ENCODE measurements at regions of chr5 and their contacts with region 1.

Region 1: DNA sequence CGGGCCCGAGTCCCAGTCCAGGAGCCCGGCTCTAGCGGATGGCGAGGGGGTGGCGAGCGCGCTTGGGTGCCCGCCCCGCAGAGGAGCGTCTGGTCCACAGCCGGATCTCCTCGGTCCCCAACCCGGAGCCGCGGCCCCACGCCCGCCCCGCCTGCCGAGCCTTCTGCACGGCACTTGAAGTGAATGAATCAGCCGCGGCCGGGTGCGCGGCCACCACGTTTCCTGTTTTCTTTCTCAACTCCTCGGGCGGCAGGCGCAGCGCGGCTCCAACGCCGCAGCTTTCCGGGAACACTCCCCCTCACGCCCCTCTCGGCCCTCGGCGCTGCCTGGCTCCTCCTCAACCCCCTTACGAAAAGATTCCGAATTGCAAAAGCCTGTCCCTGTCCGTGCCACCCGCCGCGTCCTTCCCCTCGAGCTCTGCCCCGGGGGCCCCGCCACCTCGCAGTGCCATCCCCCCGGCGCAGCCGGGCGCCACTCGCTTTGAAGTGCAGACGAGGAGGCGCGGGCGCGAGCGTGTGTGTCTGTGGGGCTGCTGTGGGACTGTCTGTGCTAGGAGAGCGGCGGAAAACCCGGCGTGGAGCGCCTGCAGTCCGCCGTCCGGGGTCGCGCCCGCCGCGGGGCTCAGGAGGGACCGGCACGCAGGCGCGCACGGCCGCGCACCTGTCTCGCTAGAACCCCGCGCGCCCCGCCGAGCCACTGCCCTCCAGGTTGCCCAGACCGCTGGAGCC is 456.6 kb downstream of the RAB3C start:
- DNase-seq: peak; percentile 95
- ATAC-seq: peak; percentile 75
- H3K4me3 Mint-ChIP-seq: peak overlapping the region; percentile 86
- H3K27ac Mint-ChIP-seq: peak overlapping the region; percentile 88
- H3K4me1 Mint-ChIP-seq: peaks cover 39% of the 10 kb centered on the region
- H3K27me3 Mint-ChIP-seq: no peaks in the 10 kb centered on the region

Region 2: GRCh38 chr5:58999804-59000595 is 39.5 kb before region 1 on chr5:
- CTCF ChIA-PET with region 1: interaction called, 5 read pairs
- POLR2A ChIA-PET with region 1: no interaction called
- intact Hi-C with region 1: loop called in 1 of 2 experiments (anchors 5 kb)
- DNase-seq: peak; percentile 27
- ATAC-seq: no peak
- H3K4me3 Mint-ChIP-seq: no peak overlapping the region
- H3K27ac Mint-ChIP-seq: no peak overlapping the region
- H3K4me1 Mint-ChIP-seq: peaks cover 54% of the 10 kb centered on the region
- H3K27me3 Mint-ChIP-seq: no peaks in the 10 kb centered on the region

Region 3: DNA sequence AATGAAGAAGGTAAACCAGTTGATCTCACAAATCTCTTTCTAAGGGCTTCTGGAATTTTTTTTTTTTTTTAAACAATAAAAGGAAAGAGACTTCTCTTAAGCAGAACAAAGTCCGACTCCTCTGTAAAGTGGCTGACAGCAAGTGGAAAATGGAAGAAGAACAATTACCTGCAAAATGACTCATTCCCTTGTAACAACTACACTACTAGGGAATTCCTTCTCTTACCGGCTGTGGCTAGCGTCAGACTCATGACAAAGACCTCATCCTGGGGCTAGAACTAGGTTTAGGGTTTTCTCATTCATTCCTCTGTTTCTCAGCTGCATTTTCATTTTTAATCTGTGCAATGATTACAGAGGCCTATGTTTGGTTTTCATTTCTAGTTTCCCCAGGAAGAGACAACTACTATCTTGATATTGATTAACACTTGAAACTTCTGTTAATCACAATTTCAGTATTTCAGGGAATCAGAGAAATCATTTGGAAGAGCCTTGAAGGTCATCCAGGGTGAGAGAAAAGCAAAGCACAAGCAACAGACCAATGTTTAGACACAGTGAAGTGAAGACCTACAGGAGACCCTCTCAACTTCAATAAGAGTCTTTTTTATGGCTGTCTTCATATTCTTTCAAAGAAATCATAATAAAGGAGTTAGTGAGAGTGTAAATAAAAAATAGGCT is 18.7 kb before region 1 on chr5:
- CTCF ChIA-PET with region 1: interaction called, 19 read pairs
- POLR2A ChIA-PET with region 1: interaction called, 11 read pairs
- intact Hi-C with region 1: loop called (anchors 1 kb)
- DNase-seq: peak; percentile 70
- ATAC-seq: peak; percentile 94
- H3K4me3 Mint-ChIP-seq: peak overlapping the region; percentile 47
- H3K27ac Mint-ChIP-seq: peak overlapping the region; percentile 94
- H3K4me1 Mint-ChIP-seq: peaks cover 65% of the 10 kb centered on the region
- H3K27me3 Mint-ChIP-seq: no peaks in the 10 kb centered on the region

Region 4: DNA sequence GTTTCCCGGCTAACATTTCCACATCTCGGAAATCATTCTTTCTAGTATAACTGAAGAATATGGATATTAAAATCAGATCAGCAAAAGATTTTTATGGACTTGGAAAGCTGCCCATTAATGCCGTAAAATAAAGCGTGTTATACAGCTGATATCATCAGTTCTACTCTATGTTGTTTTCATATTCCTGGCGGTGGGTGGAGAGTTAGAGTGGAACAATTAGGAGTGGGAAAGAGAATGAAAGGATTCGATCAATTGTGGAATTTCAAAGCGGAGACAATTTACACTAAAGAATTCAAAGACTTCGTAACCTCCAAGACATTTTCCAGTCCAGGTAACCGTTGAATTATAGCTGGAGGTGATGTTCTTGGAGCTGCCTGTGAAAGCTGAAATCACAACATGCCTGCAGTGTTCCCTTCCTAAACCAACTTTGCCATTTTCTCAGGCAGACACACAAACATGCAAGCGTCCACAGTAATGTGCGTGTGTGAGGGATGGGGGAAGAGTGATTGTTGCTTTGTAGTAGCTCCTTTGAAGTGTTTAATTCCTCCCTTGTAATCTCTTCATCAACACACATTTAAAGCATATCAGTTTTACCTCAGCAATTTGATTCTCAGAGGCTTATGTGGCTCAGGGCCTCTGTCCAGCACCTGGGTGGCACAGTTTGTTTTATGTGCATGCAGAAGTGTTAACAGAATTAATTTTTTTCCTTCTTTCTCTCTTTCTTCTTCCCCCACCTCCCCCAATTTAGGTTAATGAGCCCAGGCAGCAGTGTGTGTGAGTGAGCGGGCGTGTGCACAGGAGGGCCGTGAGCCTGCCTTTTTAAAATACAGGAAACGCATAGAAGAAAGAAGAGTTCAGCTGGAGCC is 87.5 kb after region 1 on chr5:
- CTCF ChIA-PET with region 1: interaction called, 55 read pairs
- POLR2A ChIA-PET with region 1: interaction called, 10 read pairs
- intact Hi-C with region 1: loop called (anchors 1 kb)
- DNase-seq: no peak
- ATAC-seq: peak; percentile 7
- H3K4me3 Mint-ChIP-seq: no peak overlapping the region
- H3K27ac Mint-ChIP-seq: no peak overlapping the region
- H3K4me1 Mint-ChIP-seq: peaks cover 23% of the 10 kb centered on the region
- H3K27me3 Mint-ChIP-seq: no peaks in the 10 kb centered on the region

Region 5: DNA sequence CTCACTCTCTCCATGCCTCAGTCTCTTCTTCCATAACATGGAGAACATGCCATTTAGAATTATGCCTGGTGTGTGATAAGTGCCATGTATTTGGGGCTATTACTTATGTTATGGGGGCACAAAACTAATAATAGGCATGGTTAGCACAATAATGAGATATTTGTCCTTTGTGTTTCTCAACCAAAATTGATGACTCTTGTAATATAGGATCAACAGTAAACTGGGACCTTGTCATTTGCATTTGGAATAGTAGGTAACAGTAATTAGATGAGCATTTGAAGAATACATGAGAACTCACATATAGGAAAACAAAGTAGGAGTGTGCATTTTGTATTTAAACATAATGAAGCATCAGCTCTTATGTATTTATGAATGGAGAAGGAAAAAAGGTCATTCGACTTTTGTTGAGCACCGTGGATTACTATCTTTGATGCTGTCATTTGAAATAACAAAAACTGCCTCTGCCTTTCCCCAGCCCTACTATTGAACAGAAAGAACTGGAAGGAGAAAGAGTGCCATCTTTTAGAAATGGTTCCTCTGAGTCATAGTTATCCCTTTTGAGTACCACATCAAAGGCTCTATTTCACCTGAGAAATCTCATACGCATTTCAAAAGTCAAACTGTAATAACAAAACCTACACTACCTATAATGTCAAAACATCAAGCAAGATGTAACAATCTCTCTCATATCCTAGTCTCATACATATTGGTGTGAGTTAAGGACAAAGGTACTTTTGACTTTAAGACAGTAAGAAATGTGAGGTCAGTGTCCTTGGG is 198.9 kb after region 1 on chr5:
- CTCF ChIA-PET with region 1: no interaction called
- POLR2A ChIA-PET with region 1: no interaction called
- intact Hi-C with region 1: loop called in 1 of 2 experiments (anchors 1 kb)
- DNase-seq: peak; percentile 20
- ATAC-seq: peak; percentile 96
- H3K4me3 Mint-ChIP-seq: no peak overlapping the region
- H3K27ac Mint-ChIP-seq: no peak overlapping the region
- H3K4me1 Mint-ChIP-seq: peaks cover 22% of the 10 kb centered on the region
- H3K27me3 Mint-ChIP-seq: peaks cover 45% of the 10 kb centered on the region

Region 6: GRCh38 chr5:59312223-59312622 is 272.8 kb after region 1 on chr5:
- CTCF ChIA-PET with region 1: no interaction called
- POLR2A ChIA-PET with region 1: no interaction called
- intact Hi-C with region 1: no loop called
- DNase-seq: no peak
- ATAC-seq: no peak
- H3K4me3 Mint-ChIP-seq: no peak overlapping the region
- H3K27ac Mint-ChIP-seq: no peak overlapping the region
- H3K4me1 Mint-ChIP-seq: no peaks in the 10 kb centered on the region
- H3K27me3 Mint-ChIP-seq: no peaks in the 10 kb centered on the region

Region 7: DNA sequence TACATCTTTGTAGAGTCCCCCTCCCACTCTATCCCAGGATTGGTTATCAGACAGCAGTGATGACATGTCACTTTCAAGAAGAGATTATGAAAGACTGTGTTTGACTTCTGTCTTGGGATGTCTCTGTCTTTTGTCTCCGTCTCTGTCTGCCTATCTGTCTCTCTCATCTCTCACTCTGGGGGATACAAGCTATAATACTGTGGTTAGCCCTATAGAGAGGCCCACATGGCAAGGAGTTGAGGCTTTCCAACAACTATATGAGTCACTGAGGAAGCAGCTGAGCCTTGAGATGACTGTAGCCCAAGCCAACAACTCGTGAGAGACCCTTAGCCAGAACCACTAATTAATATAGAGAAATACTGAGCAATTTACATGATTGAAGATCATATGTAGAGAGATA is 569.3 kb after region 1 on chr5:
- CTCF ChIA-PET with region 1: no interaction called
- POLR2A ChIA-PET with region 1: no interaction called
- intact Hi-C with region 1: loop called in 1 of 2 experiments (anchors 10 kb)
- DNase-seq: peak; percentile 28
- ATAC-seq: peak; percentile 58
- H3K4me3 Mint-ChIP-seq: no peak overlapping the region
- H3K27ac Mint-ChIP-seq: no peak overlapping the region
- H3K4me1 Mint-ChIP-seq: peaks cover 18% of the 10 kb centered on the region
- H3K27me3 Mint-ChIP-seq: peaks cover 22% of the 10 kb centered on the region

Measured in activated CD4-positive, alpha-beta T cell treated with anti-CD3 and anti-CD28 coated beads for 36 hours (primary cell).